ENCODE measurements at regions of chr2 and their contacts with region 1.

Region 1: DNA sequence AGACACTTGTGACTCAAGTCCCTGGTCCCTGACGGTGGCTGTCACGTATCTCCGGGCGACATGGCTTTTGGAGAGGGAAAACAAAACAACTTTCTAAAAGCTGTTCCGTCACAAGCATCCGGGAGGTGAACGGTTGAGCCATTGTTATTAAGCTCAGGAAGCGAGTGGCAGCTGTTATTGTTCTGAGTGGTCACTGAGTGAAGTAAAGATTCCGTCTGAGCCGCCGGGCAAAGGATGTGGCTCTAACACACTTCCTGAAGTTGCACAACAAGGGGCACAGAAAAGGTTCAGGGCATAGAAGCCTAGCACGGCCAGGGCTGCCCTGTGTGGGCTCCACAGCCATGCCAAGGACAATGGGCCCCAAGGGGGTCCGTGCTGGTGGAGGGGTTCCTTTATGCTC is 24.3 kb downstream of the INPP5D start:
- DNase-seq: peak; percentile 83
- H3K4me3 Mint-ChIP-seq: peak overlapping the region; percentile 64
- H3K27ac Mint-ChIP-seq: peak overlapping the region; percentile 82
- H3K4me1 Mint-ChIP-seq: peaks cover 69% of the 10 kb centered on the region
- H3K27me3 Mint-ChIP-seq: no peaks in the 10 kb centered on the region

Region 2: DNA sequence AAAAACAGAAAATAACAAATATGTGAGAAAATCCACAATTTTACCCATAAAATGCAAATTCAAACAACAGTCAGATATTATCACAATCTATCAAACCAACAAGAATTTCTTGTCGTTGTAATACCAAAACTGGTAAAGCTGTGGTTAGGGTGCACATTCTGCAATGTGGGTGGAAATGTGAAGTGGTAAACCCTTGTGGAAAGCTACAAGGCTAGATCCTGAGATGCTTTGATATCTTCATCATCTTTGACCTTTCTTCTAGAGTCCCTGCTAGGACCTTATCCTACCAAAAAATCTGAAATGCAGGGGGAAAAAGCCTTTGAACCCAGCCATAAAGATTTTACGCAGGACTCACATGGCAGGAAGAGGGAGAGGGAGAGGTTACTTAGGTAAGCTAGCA is 149.8 kb after region 1 on chr2:
- intact Hi-C with region 1: loop called (anchors 1 kb)
- DNase-seq: peak; percentile 76
- H3K4me3 Mint-ChIP-seq: peak overlapping the region; percentile 54
- H3K27ac Mint-ChIP-seq: peak overlapping the region; percentile 89
- H3K4me1 Mint-ChIP-seq: peaks cover 60% of the 10 kb centered on the region
- H3K27me3 Mint-ChIP-seq: no peaks in the 10 kb centered on the region

Measured in activated CD4-positive, alpha-beta T cell treated with anti-CD3 and anti-CD28 coated beads, Interleukin-2, amount 10 ng/mL, durations not matched to agents 24 days and 14 days (primary cell).